ENCODE measurements at regions of chr1 and their contacts with region 1.

Region 1: GRCh38 chr1:40668769-40669525 is 3.5 kb upstream of the RIMS3 start:
- DNase-seq: peak; percentile 91
- ATAC-seq: peak; percentile 77
- H3K4me3 Mint-ChIP-seq: peak overlapping the region; percentile 56
- H3K27ac Mint-ChIP-seq: no peak overlapping the region
- H3K4me1 Mint-ChIP-seq: peaks cover 15% of the 10 kb centered on the region
- H3K27me3 Mint-ChIP-seq: peaks cover 2% of the 10 kb centered on the region
- CTCF ChIP-seq: peak; percentile 98

Region 2: GRCh38 chr1:40612345-40612831 is 56.6 kb before region 1 on chr1:
- CTCF ChIA-PET with region 1: interaction called, 9 read pairs
- POLR2A ChIA-PET with region 1: no interaction called
- intact Hi-C with region 1: loop called (anchors 5 kb)
- DNase-seq: peak; percentile 82
- ATAC-seq: peak; percentile 97
- H3K4me3 Mint-ChIP-seq: no peak overlapping the region
- H3K27ac Mint-ChIP-seq: no peak overlapping the region
- H3K4me1 Mint-ChIP-seq: no peaks in the 10 kb centered on the region
- H3K27me3 Mint-ChIP-seq: no peaks in the 10 kb centered on the region
- CTCF ChIP-seq: peak; percentile 86

Region 3: GRCh38 chr1:40630488-40631381 is 38.2 kb before region 1 on chr1:
- CTCF ChIA-PET with region 1: interaction called, 29 read pairs
- POLR2A ChIA-PET with region 1: interaction called, 5 read pairs
- intact Hi-C with region 1: no loop called
- DNase-seq: peak; percentile 58
- ATAC-seq: no peak
- H3K4me3 Mint-ChIP-seq: no peak overlapping the region
- H3K27ac Mint-ChIP-seq: no peak overlapping the region
- H3K4me1 Mint-ChIP-seq: peaks cover 38% of the 10 kb centered on the region
- H3K27me3 Mint-ChIP-seq: no peaks in the 10 kb centered on the region
- CTCF ChIP-seq: peak; percentile 34

Region 4: DNA sequence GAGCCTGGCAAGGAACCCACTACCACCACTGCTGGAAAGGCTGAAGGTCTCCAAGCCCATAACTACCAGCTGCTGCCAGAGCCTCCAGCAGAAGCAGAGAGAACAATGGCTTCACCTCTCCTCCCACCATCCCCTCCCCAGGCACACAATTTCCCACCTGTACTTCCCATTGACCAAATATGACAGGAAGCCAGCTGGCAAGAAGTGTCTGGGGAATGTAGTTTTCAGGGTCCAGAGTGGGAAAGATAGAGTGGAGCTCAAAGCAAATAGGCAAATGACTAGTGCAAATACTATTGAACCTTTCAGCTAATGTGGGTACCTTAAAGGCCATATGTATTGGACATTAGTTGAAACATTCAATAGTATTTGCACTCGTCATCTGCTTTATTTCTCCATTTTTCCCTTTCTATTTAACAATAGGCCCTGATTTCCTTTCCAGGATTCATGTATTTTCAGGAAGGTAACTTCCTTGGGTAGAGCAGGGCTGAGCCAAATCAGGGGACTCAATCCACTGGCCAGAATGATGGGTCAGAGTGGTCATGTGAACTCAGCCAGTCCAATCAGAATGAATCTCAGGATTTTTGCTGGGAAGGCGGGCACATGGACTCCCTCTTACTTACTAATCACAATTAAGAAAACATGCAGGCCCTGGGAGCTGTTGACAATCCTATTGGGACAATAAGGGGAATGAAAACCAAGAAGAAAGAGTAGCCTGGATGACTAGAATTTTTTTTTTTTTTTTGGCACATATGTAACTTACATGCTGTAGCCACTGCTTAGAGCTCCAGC is 10.4 kb after region 1 on chr1:
- CTCF ChIA-PET with region 1: interaction called, 18 read pairs
- POLR2A ChIA-PET with region 1: interaction called, 6 read pairs
- intact Hi-C with region 1: no loop called
- DNase-seq: no peak
- ATAC-seq: no peak
- H3K4me3 Mint-ChIP-seq: no peak overlapping the region
- H3K27ac Mint-ChIP-seq: no peak overlapping the region
- H3K4me1 Mint-ChIP-seq: no peaks in the 10 kb centered on the region
- H3K27me3 Mint-ChIP-seq: no peaks in the 10 kb centered on the region
- CTCF ChIP-seq: no peak

Region 5: GRCh38 chr1:40684669-40685068 is 15.7 kb after region 1 on chr1:
- CTCF ChIA-PET with region 1: interaction called, 30 read pairs
- POLR2A ChIA-PET with region 1: interaction called, 3 read pairs
- intact Hi-C with region 1: no loop called
- DNase-seq: no peak
- ATAC-seq: no peak
- H3K4me3 Mint-ChIP-seq: no peak overlapping the region
- H3K27ac Mint-ChIP-seq: no peak overlapping the region
- H3K4me1 Mint-ChIP-seq: peaks cover 2% of the 10 kb centered on the region
- H3K27me3 Mint-ChIP-seq: no peaks in the 10 kb centered on the region
- CTCF ChIP-seq: no peak

Region 6: GRCh38 chr1:40691538-40692428 is 22.8 kb after region 1 on chr1 and contains the start of gene NFYC:
- CTCF ChIA-PET with region 1: interaction called, 30 read pairs
- POLR2A ChIA-PET with region 1: interaction called, 6 read pairs
- intact Hi-C with region 1: no loop called
- DNase-seq: peak; percentile 98
- ATAC-seq: peak; percentile 86
- H3K4me3 Mint-ChIP-seq: peak within 1 kb of the TSS; percentile 87
- H3K27ac Mint-ChIP-seq: peak within 1 kb of the TSS; percentile 93
- H3K4me1 Mint-ChIP-seq: peaks cover 50% of the 10 kb centered on the region
- H3K27me3 Mint-ChIP-seq: no peaks in the 10 kb centered on the region
- CTCF ChIP-seq: no peak
- total RNA-seq, gene NFYC: 45.6 to 53.8 TPM

Region 7: GRCh38 chr1:40849801-40850592 is 181.1 kb after region 1 on chr1:
- CTCF ChIA-PET with region 1: interaction called, 12 read pairs
- POLR2A ChIA-PET with region 1: no interaction called
- intact Hi-C with region 1: no loop called
- DNase-seq: peak; percentile 85
- ATAC-seq: peak; percentile 92
- H3K4me3 Mint-ChIP-seq: peak overlapping the region; percentile 22
- H3K27ac Mint-ChIP-seq: peak overlapping the region; percentile 49
- H3K4me1 Mint-ChIP-seq: peaks cover 12% of the 10 kb centered on the region
- H3K27me3 Mint-ChIP-seq: no peaks in the 10 kb centered on the region
- CTCF ChIP-seq: peak; percentile 86

Region 8: GRCh38 chr1:40901886-40902852 is 233.2 kb after region 1 on chr1:
- CTCF ChIA-PET with region 1: no interaction called
- POLR2A ChIA-PET with region 1: no interaction called
- intact Hi-C with region 1: no loop called
- DNase-seq: no peak
- ATAC-seq: no peak
- H3K4me3 Mint-ChIP-seq: no peak overlapping the region
- H3K27ac Mint-ChIP-seq: no peak overlapping the region
- H3K4me1 Mint-ChIP-seq: peaks cover 5% of the 10 kb centered on the region
- H3K27me3 Mint-ChIP-seq: no peaks in the 10 kb centered on the region
- CTCF ChIP-seq: no peak